ENCODE measurements at regions of chr6 and their contacts with region 1.

Region 1: DNA sequence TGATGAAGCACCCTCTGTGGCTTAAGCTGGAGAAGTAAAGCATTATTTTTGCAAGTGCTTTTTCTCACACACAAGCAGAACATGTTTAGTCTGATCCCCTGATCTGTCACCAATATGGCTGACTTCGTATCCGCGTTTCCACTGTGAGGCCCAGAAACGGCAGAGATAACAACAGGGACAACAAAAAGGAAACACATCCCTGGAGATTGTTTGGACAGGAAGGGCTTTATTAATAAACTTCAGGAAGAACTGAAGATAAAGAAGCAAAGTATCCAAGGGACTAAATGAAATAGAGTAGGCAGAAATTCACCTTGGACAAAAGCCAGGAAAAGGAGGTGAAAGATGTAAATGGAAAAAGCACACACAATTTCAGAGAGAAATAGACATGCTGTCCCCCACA is 49.2 kb downstream of the RARS2 start:
- DNase-seq: no peak
- ATAC-seq: no peak
- H3K4me3 ChIP-seq: no peak overlapping the region
- H3K27ac ChIP-seq: no peak overlapping the region
- H3K4me1 ChIP-seq: no peaks in the 10 kb centered on the region; the same call in none of the 2 replicates
- H3K27me3 ChIP-seq: no peaks in the 10 kb centered on the region
- CTCF ChIP-seq: no peak
- POLR2A ChIP-seq: no peak
- RAD21 ChIP-seq: no peak

Region 2: DNA sequence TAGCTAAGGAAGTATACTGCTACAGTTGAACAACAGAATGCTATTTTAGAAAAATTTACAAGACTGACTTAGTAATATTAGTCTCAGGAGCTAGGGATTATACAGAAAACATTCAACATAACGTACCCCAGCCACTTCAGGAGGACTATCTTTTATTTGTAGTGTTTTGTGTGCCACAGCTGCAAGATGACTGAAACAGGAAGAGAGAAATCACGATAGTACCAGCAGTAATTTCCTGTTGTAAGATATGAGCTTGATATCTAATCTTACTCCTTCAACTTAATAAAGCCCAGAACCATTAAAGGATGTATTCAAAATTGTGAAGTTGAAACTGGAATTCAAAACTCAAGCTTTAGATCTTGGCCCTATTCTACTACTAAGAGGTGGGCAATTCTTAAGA is 25.7 kb before region 1 on chr6:
- CTCF ChIA-PET with region 1: no interaction called
- POLR2A ChIA-PET with region 1: no interaction called
- dilution Hi-C with region 1: no loop called
- in situ Hi-C with region 1: no loop called
- intact Hi-C with region 1: loop called (anchors 5 kb)
- DNase-seq: no peak
- ATAC-seq: no peak
- H3K4me3 ChIP-seq: no peak overlapping the region
- H3K27ac ChIP-seq: no peak overlapping the region
- H3K4me1 ChIP-seq: no peaks in the 10 kb centered on the region
- H3K27me3 ChIP-seq: no peaks in the 10 kb centered on the region
- CTCF ChIP-seq: no peak
- POLR2A ChIP-seq: no peak
- RAD21 ChIP-seq: no peak

Region 3: DNA sequence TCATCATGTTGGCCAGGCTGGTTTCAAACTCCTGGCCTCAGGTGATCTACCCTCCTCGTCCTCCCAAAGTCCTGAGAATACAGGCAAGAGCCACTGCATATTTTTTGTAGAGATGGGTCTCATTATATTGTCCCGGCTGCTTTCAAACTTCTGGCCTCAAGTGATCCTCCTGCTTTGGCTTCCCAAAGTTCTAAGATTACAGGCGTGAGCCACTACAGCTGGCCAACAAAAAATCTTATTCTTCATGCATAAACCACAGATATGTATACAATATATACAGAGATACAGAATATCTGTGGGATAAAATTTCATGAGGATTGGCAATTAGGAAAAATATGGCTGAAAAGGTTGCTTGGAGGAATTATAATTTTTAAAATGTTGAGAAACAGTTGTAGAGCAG is 17.9 kb before region 1 on chr6:
- CTCF ChIA-PET with region 1: no interaction called
- POLR2A ChIA-PET with region 1: interaction called, 13 read pairs
- dilution Hi-C with region 1: no loop called
- in situ Hi-C with region 1: no loop called
- intact Hi-C with region 1: no loop called
- DNase-seq: peak; percentile 73
- ATAC-seq: peak; percentile 85
- H3K4me3 ChIP-seq: no peak overlapping the region
- H3K27ac ChIP-seq: no peak overlapping the region; the same call in 1 of the 2 replicates
- H3K4me1 ChIP-seq: peaks cover 2% of the 10 kb centered on the region; the same call in 1 of the 2 replicates
- H3K27me3 ChIP-seq: no peaks in the 10 kb centered on the region
- CTCF ChIP-seq: no peak
- POLR2A ChIP-seq: no peak
- RAD21 ChIP-seq: no peak

Region 4: GRCh38 chr6:87600576-87600975 is 60.0 kb after region 1 on chr6:
- CTCF ChIA-PET with region 1: no interaction called
- POLR2A ChIA-PET with region 1: interaction called, 27 read pairs
- dilution Hi-C with region 1: no loop called
- in situ Hi-C with region 1: no loop called
- intact Hi-C with region 1: no loop called
- DNase-seq: no peak
- ATAC-seq: no peak
- H3K4me3 ChIP-seq: no peak overlapping the region
- H3K27ac ChIP-seq: no peak overlapping the region
- H3K4me1 ChIP-seq: no peaks in the 10 kb centered on the region
- H3K27me3 ChIP-seq: no peaks in the 10 kb centered on the region
- CTCF ChIP-seq: no peak
- POLR2A ChIP-seq: no peak
- RAD21 ChIP-seq: no peak